Transverse colon (tissue), 4 donors: ENCODE measurements at regions of chr1 and their contacts with region 1.

Region 1: DNA sequence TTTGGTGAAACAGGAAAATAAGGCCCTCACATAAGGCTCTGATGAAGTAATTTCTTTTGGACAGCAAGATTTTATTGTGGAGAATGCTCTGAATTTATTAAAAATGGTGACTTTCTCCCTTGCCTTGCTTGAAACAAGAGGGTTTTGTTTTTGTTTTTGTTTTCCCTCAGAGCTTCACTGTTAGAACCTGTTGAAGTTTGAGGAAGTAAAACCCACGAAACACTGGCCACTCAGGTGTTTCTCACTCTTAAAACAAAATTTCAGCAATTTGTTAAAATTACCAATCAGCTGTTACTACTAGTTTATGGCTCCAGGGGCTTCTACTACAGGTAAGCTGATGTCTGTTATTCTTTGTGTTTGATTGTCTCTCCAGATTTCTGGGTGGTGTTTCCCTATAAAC is 112.6 kb upstream of the B3GALT2 start:
- DNase-seq: no peak
- H3K4me3 ChIP-seq: no peak overlapping the region
- H3K27ac ChIP-seq: no peak overlapping the region
- H3K4me1 ChIP-seq: peaks cover 0 to 6% (median 0%) of the 10 kb centered on the region in 4 donors
- H3K27me3 ChIP-seq: no peaks in the 10 kb centered on the region
- CTCF ChIP-seq: no peak
- EP300 ChIP-seq: no peak
- POLR2A ChIP-seq: no peak

Region 2: GRCh38 chr1:194378517-194378916 is 1079.5 kb after region 1 on chr1:
- in situ Hi-C with region 1: no loop called
- intact Hi-C with region 1: loop called (anchors 5 kb)
- DNase-seq: no peak
- H3K4me3 ChIP-seq: no peak overlapping the region
- H3K27ac ChIP-seq: no peak overlapping the region
- H3K4me1 ChIP-seq: no peaks in the 10 kb centered on the region
- H3K27me3 ChIP-seq: no peaks in the 10 kb centered on the region
- CTCF ChIP-seq: no peak
- EP300 ChIP-seq: no peak
- POLR2A ChIP-seq: no peak